ENCODE measurements at regions of chr7 and their contacts with region 1.

Region 1: DNA sequence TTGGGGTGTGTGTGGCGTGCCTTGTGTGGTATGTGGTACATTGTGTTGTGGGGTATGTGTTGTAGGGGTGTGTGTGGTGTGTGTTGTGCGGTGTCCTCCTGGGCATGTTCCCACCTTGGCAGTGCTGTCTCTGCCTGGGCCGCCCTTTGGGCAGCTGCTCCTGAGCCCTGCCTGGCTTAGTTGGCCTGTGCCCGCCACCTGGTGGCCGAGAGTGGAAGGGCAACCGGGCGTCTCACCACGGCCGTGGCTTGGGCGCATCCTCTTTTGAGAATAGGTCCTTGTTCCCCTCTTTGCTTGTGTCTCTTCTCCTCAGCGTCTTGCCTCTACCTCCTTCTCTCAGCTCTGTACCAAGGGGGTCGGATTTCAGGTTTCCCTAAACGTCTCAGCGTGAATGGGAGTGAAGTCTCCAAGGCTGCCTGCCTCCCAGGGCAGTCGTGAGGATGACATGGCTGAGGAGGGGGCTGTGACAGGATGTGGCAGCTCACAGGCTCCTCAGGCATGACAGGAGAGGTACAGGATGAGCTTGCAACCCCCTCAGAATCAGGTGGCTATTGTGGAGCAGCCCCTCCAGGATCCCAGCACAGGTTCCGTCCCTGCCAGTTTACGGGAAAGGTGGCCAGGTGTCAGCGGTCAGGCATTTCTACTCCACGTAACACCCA is 98.4 kb upstream of the PODXL start:
- DNase-seq: peak; percentile 94
- ATAC-seq: peak; percentile 94

Region 2: DNA sequence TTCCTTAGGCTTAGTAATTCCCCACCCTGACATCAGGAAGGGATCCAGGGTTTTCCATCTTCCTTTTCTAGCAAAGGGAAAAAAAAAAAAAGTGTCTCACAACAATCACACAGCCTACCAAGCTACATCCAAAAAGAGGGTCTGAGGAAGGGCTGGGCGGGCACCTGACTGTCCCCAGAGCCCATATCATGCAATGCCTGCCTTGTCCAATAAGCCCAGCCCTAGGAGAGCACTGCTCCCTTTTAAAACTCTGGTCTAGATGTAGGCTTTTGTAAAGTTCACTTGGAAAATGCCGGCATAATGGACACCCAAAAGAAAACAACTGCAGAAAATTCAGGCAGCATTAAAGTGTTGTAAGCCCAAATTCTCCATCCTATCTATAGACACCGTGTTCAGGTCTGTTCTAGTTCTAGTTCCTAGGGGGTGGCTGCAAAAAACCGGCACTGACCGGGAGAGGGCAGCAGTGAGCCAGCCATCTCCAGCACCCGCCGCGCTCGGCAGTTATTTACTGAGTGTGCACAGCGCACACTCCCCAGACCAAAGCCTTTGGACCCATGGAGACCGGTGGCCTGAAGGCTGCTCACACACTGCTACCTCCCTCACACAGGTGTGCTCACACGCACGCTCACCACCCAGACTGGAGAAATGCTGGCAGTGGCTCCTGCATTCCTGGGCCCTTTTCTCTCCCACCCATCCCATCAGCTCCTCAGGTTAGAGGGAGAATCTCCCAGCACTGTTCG is 147.0 kb before region 1 on chr7:
- intact Hi-C with region 1: loop called (anchors 2 kb)
- DNase-seq: peak; percentile 93
- ATAC-seq: peak; percentile 83

Region 3: GRCh38 chr7:131546583-131547111 is 108.2 kb before region 1 on chr7:
- intact Hi-C with region 1: loop called (anchors 5 kb)
- DNase-seq: no peak
- ATAC-seq: no peak